ENCODE measurements at regions of chr2 and their contacts with region 1.

Region 1: DNA sequence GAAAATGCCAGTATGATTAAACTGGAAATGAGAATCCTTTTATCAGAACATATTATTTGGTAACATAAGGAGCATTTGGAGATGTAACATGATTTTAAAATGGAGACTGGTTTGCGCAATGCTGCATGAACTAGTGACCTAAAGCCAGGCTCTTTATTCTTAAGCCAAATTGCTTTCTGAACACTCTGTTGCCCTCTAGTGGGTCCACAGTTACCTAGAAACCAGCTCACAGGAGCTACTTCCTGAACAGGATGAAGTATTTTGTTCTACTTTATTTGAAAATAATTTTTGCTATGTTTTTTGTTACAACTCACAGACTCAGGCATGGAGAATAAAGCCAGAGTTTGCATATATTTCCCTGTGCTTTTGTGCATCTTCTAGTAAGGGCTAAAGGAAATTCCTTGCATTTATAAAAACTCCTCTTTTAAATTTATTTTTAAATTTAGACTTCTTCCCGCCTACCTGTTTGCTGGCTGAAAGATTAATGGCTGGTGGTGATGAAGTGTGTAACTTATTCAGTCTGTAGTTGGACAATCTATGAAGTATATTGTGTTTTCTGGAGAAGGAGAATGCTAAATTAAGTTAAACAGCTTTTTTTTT is 146.7 kb downstream of the PARD3B start:
- DNase-seq: no peak
- H3K4me3 ChIP-seq: no peak overlapping the region
- H3K27ac ChIP-seq: no peak overlapping the region
- H3K4me1 ChIP-seq: peaks cover 20% of the 10 kb centered on the region
- H3K27me3 ChIP-seq: no peaks in the 10 kb centered on the region
- CTCF ChIP-seq: peak; percentile 85

Region 2: DNA sequence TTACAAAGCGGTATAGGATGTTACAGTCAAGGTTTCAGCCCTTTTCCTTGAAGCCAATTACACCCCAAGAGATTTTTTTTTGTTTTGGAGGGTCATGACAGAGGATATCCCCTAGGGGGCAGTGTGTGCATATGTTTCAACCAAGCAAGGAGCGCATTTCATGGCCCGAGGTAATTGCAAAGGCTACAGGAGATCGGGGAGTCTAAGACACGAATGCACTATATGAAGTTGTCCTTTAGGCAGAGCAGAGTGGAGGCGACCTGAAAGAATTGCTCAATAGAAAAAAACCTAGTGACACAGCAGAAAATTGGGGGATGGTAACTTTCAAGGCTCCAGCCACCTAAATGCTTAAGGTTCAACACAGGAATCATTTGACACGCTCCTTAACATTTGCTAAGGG is 366.5 kb before region 1 on chr2:
- intact Hi-C with region 1: loop called (anchors 2 kb)
- DNase-seq: no peak
- H3K4me3 ChIP-seq: no peak overlapping the region
- H3K27ac ChIP-seq: no peak overlapping the region
- H3K4me1 ChIP-seq: peaks cover 19% of the 10 kb centered on the region
- H3K27me3 ChIP-seq: peaks cover 5% of the 10 kb centered on the region
- CTCF ChIP-seq: peak; percentile 92

Region 3: GRCh38 chr2:204914708-204915107 is 222.7 kb after region 1 on chr2:
- intact Hi-C with region 1: no loop called
- DNase-seq: no peak
- H3K4me3 ChIP-seq: no peak overlapping the region
- H3K27ac ChIP-seq: no peak overlapping the region
- H3K4me1 ChIP-seq: no peaks in the 10 kb centered on the region
- H3K27me3 ChIP-seq: no peaks in the 10 kb centered on the region
- CTCF ChIP-seq: no peak

Region 4: GRCh38 chr2:205270689-205271088 is 578.7 kb after region 1 on chr2:
- intact Hi-C with region 1: no loop called
- DNase-seq: no peak
- H3K4me3 ChIP-seq: no peak overlapping the region
- H3K27ac ChIP-seq: no peak overlapping the region
- H3K4me1 ChIP-seq: no peaks in the 10 kb centered on the region
- H3K27me3 ChIP-seq: no peaks in the 10 kb centered on the region
- CTCF ChIP-seq: no peak